ENCODE measurements at regions of chr1 and their contacts with region 1.

Region 1: DNA sequence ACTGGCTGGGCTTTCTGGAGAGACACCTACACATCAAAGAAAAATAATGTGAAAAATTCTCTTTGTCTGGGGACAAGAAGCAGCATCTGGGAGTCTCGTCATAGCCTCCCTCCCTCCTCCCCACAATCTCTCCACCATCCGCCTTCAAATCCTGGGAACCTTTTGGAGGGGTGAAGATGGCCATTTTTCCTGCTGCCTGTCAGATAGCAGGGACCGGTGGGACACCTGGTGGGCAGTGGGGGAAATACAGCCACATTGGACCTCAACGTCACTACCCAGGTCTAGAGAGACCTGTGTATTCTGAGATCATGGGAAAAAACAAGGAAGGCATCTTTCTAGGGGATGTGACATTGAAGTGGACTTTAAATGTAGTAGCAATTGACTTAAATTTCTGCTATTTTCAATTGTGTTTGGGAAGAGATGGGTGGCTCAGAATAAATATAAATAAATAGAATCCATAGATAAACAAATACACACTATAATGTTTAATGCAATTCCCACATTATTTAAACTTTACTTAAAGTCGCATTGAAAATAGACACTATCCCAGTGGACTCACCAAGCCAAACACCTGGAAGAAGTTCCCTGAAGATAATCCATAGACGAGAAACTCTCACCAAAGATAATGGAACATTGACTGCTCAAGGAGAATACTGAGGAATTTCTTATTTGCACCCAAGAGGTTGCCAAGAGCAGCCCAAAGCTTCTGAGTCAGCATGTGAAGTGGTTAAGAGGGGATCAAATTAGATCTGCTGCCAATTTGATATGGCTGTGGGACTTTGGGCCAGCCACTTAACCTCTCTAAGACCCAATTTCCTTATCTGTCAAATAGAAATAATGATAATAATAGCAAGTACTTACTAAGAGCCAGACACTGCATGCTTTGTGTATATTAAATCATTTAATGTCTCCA is 147.6 kb upstream of the CAMK1G start:
- DNase-seq: peak; percentile 85 to 91
- H3K4me3 ChIP-seq: no peak overlapping the region
- H3K4me3 Mint-ChIP-seq: no peak overlapping the region
- H3K27ac Mint-ChIP-seq: peak overlapping the region; percentile 0
- H3K4me1 ChIP-seq: peaks cover 45% of the 10 kb centered on the region
- H3K4me1 Mint-ChIP-seq: peaks cover 19% of the 10 kb centered on the region
- H3K27me3 ChIP-seq: no peaks in the 10 kb centered on the region
- H3K27me3 Mint-ChIP-seq: no peaks in the 10 kb centered on the region
- CTCF ChIP-seq: peak; percentile 84 to 94

Region 2: GRCh38 chr1:208807446-208808127 is 628.3 kb before region 1 on chr1:
- CTCF ChIA-PET with region 1: no interaction called
- POLR2A ChIA-PET with region 1: no interaction called
- intact Hi-C with region 1: no loop called
- DNase-seq: no peak
- H3K4me3 ChIP-seq: no peak overlapping the region
- H3K4me3 Mint-ChIP-seq: no peak overlapping the region
- H3K27ac Mint-ChIP-seq: no peak overlapping the region
- H3K4me1 ChIP-seq: no peaks in the 10 kb centered on the region
- H3K4me1 Mint-ChIP-seq: no peaks in the 10 kb centered on the region
- H3K27me3 ChIP-seq: no peaks in the 10 kb centered on the region
- H3K27me3 Mint-ChIP-seq: peaks cover 15% of the 10 kb centered on the region
- CTCF ChIP-seq: no peak

Region 3: DNA sequence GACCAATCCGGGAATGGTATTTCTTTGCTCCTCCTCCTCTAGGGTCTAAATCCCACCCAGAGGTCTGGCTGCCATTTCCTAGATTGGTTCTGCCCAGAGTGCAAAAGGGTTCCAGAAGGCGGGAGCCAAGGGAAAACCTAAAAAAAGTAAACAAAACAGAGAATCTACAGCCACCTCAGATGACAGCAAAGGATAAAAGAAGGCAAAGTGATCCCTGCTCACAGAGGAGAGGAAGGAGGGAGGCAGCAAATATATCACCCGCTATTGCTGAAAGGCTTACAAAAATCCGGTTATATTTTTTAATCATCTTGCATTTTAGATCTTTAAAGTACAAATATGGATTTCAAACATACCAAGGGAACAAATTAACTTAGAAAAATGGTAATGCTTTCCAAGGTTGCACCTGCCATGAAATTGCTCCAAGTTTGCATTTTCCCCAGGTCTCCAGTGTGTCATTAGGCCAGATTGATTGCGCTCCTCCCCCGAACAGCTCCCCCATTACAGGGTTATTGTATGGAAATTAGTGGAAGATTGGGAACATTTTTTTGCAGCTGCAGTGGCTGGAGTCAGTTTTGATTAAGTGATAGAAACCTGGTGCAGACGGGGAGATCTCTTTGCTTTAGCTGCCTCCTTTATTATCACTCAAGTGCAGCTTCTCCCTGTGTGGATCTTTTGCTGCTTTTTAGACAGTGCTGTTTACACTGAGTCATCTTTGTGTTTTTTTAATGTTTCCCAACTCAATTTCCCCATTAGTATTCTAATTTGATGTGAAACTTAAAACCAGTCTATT is 132.9 kb before region 1 on chr1:
- CTCF ChIA-PET with region 1: no interaction called
- POLR2A ChIA-PET with region 1: no interaction called
- intact Hi-C with region 1: no loop called
- DNase-seq: no peak
- H3K4me3 ChIP-seq: no peak overlapping the region
- H3K4me3 Mint-ChIP-seq: no peak overlapping the region
- H3K27ac Mint-ChIP-seq: no peak overlapping the region
- H3K4me1 ChIP-seq: no peaks in the 10 kb centered on the region
- H3K4me1 Mint-ChIP-seq: no peaks in the 10 kb centered on the region
- H3K27me3 ChIP-seq: peaks cover under 1% of the 10 kb centered on the region; the same call in 1 of the 2 replicates
- H3K27me3 Mint-ChIP-seq: peaks cover 22% of the 10 kb centered on the region
- CTCF ChIP-seq: no peak

Region 4: GRCh38 chr1:209335178-209335577 is 100.7 kb before region 1 on chr1:
- CTCF ChIA-PET with region 1: interaction called, 3 read pairs
- POLR2A ChIA-PET with region 1: no interaction called
- intact Hi-C with region 1: loop called (anchors 1 kb)
- DNase-seq: peak; percentile 49 to 51
- H3K4me3 ChIP-seq: no peak overlapping the region
- H3K4me3 Mint-ChIP-seq: no peak overlapping the region
- H3K27ac Mint-ChIP-seq: no peak overlapping the region
- H3K4me1 ChIP-seq: no peaks in the 10 kb centered on the region
- H3K4me1 Mint-ChIP-seq: peaks cover 6% of the 10 kb centered on the region
- H3K27me3 ChIP-seq: no peaks in the 10 kb centered on the region
- H3K27me3 Mint-ChIP-seq: no peaks in the 10 kb centered on the region
- CTCF ChIP-seq: peak; percentile 87 to 88

Region 5: GRCh38 chr1:209383907-209384709 is 51.8 kb before region 1 on chr1:
- CTCF ChIA-PET with region 1: interaction called, 5 read pairs
- POLR2A ChIA-PET with region 1: interaction called, 4 read pairs
- intact Hi-C with region 1: loop called (anchors 1 kb)
- DNase-seq: peak; percentile 66
- H3K4me3 ChIP-seq: no peak overlapping the region
- H3K4me3 Mint-ChIP-seq: peak overlapping the region; percentile 39
- H3K27ac Mint-ChIP-seq: peak overlapping the region; percentile 69
- H3K4me1 ChIP-seq: peaks cover 62% of the 10 kb centered on the region
- H3K4me1 Mint-ChIP-seq: peaks cover 43% of the 10 kb centered on the region
- H3K27me3 ChIP-seq: no peaks in the 10 kb centered on the region
- H3K27me3 Mint-ChIP-seq: no peaks in the 10 kb centered on the region
- CTCF ChIP-seq: no peak